H1 (cell line): ENCODE measurements at regions of chr19 and their contacts with region 1.

Region 1: GRCh38 chr19:47152224-47153017 is 21.8 kb downstream of the SAE1 start:
- DNase-seq: no peak
- H3K4me3 ChIP-seq: no peak overlapping the region
- H3K27ac ChIP-seq: no peak overlapping the region
- H3K4me1 ChIP-seq: peaks cover under 1 to 8% (median 5%) of the 10 kb centered on the region in 4 experiments; a peak in 5 of 7 replicates
- H3K27me3 ChIP-seq: no peaks in the 10 kb centered on the region
- CTCF ChIP-seq: no peak
- EP300 ChIP-seq: no peak
- POLR2A ChIP-seq: no peak
- RAD21 ChIP-seq: no peak

Region 2: DNA sequence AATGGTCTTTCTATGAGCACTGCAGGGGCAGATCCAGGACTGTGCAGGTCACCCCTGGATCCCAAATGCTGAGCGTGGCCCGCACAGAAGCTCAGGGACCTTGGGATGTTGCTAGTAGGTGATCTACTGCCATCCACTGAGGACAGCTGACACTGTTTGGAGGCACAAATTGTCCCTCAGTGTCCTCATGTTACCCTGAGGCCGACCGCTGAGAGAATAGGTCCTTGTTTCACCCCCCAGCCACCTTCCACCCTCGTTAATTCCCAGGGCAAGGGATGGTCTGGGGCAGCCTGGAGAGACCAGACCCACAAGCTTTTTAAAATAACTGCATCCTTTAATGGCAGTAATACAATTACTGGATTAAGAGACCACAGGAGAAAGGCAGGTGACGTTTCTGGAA is 88.5 kb before region 1 on chr19:
- CTCF ChIA-PET with region 1: no interaction called
- POLR2A ChIA-PET with region 1: no interaction called
- DNase-seq: no peak
- H3K4me3 ChIP-seq: no peak overlapping the region
- H3K27ac ChIP-seq: no peak overlapping the region
- H3K4me1 ChIP-seq: no peaks in the 10 kb centered on the region; a peak in 1 of 7 replicates
- H3K27me3 ChIP-seq: no peaks in the 10 kb centered on the region
- CTCF ChIP-seq: no peak
- EP300 ChIP-seq: no peak
- POLR2A ChIP-seq: no peak
- RAD21 ChIP-seq: no peak

Region 3: DNA sequence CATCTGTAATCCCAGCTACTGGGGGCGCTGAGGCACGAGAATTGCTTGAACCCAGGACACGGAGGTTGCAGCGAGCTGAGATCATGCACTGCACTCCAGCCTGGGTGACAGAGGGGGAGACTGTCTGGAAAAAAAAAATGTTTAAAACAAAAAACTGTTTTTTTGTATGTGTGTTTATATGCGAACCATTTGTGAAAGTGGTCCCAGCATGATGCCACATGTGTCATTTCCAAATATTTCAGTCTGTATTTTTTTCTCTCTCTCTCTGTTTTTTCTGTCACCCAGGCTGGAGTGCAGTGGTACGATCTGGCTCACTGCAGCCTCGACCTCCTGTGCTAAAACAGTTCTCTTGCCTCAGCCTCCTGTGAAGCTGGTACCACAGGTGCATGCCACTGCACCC is 15.6 kb after region 1 on chr19:
- CTCF ChIA-PET with region 1: interaction called, 15 read pairs
- POLR2A ChIA-PET with region 1: interaction called, 38 read pairs
- DNase-seq: no peak
- H3K4me3 ChIP-seq: no peak overlapping the region
- H3K27ac ChIP-seq: no peak overlapping the region
- H3K4me1 ChIP-seq: no peaks in the 10 kb centered on the region
- H3K27me3 ChIP-seq: no peaks in the 10 kb centered on the region
- CTCF ChIP-seq: no peak
- EP300 ChIP-seq: no peak
- POLR2A ChIP-seq: no peak
- RAD21 ChIP-seq: no peak

Region 4: GRCh38 chr19:47330466-47330869 is 178.0 kb after region 1 on chr19:
- CTCF ChIA-PET with region 1: no interaction called
- POLR2A ChIA-PET with region 1: no interaction called
- DNase-seq: no peak
- H3K4me3 ChIP-seq: no peak overlapping the region
- H3K27ac ChIP-seq: no peak overlapping the region
- H3K4me1 ChIP-seq: no peaks in the 10 kb centered on the region
- H3K27me3 ChIP-seq: no peaks in the 10 kb centered on the region
- CTCF ChIP-seq: no peak
- EP300 ChIP-seq: no peak
- POLR2A ChIP-seq: no peak
- RAD21 ChIP-seq: no peak